H1 (cell line): ENCODE measurements at regions of chr3 and their contacts with region 1.

Region 1: DNA sequence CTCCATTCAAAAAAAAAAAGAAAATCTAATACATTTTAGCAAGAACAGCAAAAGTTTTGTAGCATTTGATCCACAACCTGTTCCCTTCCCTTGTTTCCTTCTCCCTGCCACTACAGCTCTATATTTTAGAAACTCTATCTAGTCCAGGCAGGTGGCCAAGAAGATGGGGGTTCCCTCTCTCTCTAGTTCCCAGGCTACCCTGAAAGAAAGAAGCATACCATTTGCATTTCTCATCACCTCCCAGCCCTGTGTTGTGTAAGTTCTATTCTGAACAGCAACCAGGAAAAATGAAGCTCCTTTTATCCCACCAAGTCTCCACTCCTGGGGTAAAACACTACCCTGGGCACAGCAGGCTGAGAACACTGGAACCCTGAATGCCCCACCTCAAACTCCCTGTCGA is 100.0 kb downstream of the PCCB start:
- DNase-seq: no peak
- H3K4me3 ChIP-seq: no peak overlapping the region
- H3K27ac ChIP-seq: no peak overlapping the region
- H3K4me1 ChIP-seq: no peaks in the 10 kb centered on the region
- H3K27me3 ChIP-seq: no peaks in the 10 kb centered on the region
- CTCF ChIP-seq: no peak
- EP300 ChIP-seq: no peak
- POLR2A ChIP-seq: no peak
- RAD21 ChIP-seq: no peak

Region 2: DNA sequence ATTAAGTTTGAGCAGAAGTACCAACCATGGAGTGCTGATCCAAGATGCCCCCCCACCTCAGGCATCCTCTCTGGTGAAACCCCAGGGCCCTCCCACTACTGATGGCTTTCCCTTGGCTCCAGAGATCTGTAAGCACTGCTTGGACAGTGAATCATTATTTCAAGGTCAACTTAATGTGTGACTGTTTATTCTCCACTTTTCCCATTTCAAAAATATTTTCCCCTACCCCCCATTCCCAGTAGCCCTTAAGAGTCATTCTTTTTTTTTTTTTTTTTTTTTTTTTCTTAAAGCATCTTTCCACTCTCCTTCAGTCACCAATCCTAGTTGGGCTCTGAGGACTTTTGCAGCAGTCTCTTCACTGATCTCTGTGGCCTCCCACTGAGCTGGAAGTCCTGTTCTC is 17.4 kb before region 1 on chr3:
- CTCF ChIA-PET with region 1: interaction called, 17 read pairs
- POLR2A ChIA-PET with region 1: no interaction called
- DNase-seq: no peak
- H3K4me3 ChIP-seq: no peak overlapping the region
- H3K27ac ChIP-seq: no peak overlapping the region
- H3K4me1 ChIP-seq: no peaks in the 10 kb centered on the region
- H3K27me3 ChIP-seq: no peaks in the 10 kb centered on the region
- CTCF ChIP-seq: no peak
- EP300 ChIP-seq: no peak
- POLR2A ChIP-seq: no peak
- RAD21 ChIP-seq: no peak